ENCODE measurements at regions of chr1 and their contacts with region 1.

Region 1: GRCh38 chr1:151146412-151147140 is at the start of gene SEMA6C:
- DNase-seq: peak in 1 of 2 experiments; percentile 90
- H3K4me3 ChIP-seq: peak within 1 kb of the TSS; percentile 81 to 88 (median 85)
- H3K27ac ChIP-seq: no peak within 1 kb of the TSS
- H3K4me1 ChIP-seq: peaks cover 15 to 31% (median 21%) of the 10 kb centered on the region in 4 experiments
- H3K27me3 ChIP-seq: peaks cover 0 to 17% (median 8%) of the 10 kb centered on the region in 4 experiments; a peak in 5 of 7 replicates
- CTCF ChIP-seq: no peak
- EP300 ChIP-seq: no peak
- POLR2A ChIP-seq: no peak
- RAD21 ChIP-seq: no peak
- total RNA-seq, gene SEMA6C: 15.7 and 17.5 TPM in 2 replicates

Region 2: GRCh38 chr1:151106894-151107293 is 39.7 kb before region 1 on chr1:
- CTCF ChIA-PET with region 1: interaction called, 285 read pairs
- POLR2A ChIA-PET with region 1: no interaction called
- DNase-seq: no peak
- H3K4me3 ChIP-seq: no peak overlapping the region
- H3K27ac ChIP-seq: no peak overlapping the region
- H3K4me1 ChIP-seq: no peaks in the 10 kb centered on the region
- H3K27me3 ChIP-seq: no peaks in the 10 kb centered on the region
- CTCF ChIP-seq: no peak
- EP300 ChIP-seq: no peak
- POLR2A ChIP-seq: no peak
- RAD21 ChIP-seq: no peak

Region 3: DNA sequence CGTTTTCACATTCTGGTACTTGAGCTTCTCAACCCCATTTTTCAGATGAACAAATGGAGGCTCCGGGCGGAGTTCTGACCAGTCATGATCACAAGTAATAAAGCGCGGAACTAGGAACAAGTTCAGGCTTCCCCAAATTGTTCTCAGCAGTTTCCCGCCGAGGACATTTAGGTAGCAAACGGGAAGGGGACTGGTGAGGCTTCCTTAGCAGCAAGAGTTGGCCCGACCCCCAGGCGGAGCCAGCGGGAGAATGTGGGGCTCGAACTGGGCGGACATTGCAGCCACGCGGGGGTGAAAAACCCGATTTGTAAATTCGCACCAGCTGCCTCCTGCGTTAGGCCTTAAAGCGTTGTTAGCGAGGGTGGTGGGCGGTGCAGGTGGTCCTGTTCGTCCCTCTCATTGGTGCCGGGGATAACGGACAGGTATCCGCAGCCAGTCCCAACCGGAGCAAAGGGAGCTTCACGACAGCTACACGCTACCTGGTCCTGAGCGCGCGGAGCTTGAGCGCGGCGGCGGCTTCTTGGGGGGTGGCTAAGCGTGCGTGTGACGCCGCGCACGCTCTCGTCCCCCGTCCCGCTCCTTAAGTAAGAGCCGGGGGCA is 15.5 kb before region 1 on chr1:
- CTCF ChIA-PET with region 1: interaction called, 94 read pairs
- POLR2A ChIA-PET with region 1: interaction called, 124 read pairs
- DNase-seq: peak; percentile 87 to 91
- H3K4me3 ChIP-seq: peak overlapping the region; percentile 37 to 64 (median 45); a peak in 7 of 8 replicates
- H3K27ac ChIP-seq: peak overlapping the region; percentile 42; the same call in 1 of the 2 replicates
- H3K4me1 ChIP-seq: peaks cover 0 to 12% (median 8%) of the 10 kb centered on the region in 4 experiments; a peak in 5 of 7 replicates
- H3K27me3 ChIP-seq: peaks cover 0 to 28% (median 20%) of the 10 kb centered on the region in 4 experiments; a peak in 5 of 7 replicates
- CTCF ChIP-seq: no peak
- EP300 ChIP-seq: no peak
- POLR2A ChIP-seq: peak in 1 of 2 experiments; percentile 67; a peak in 1 of 3 replicates
- RAD21 ChIP-seq: 0 out of 4 replicates have a peak, but pooled peaks of 1 of the 2 experiments have one; percentile 10

Region 4: GRCh38 chr1:151165738-151166505 is 19.3 kb after region 1 on chr1 and contains the starts of genes LYSMD1 and SCNM1:
- CTCF ChIA-PET with region 1: interaction called, 3 read pairs
- POLR2A ChIA-PET with region 1: interaction called, 13 read pairs
- DNase-seq: peak; percentile 90 to 93
- H3K4me3 ChIP-seq: peak within 1 kb of the TSS; percentile 80 to 99 (median 95)
- H3K27ac ChIP-seq: peak within 1 kb of the TSS; percentile 42
- H3K4me1 ChIP-seq: peaks cover 5 to 10% (median 5%) of the 10 kb centered on the region in 4 experiments
- H3K27me3 ChIP-seq: no peaks in the 10 kb centered on the region
- CTCF ChIP-seq: no peak
- EP300 ChIP-seq: peak in 1 of 2 experiments; percentile 71; a peak in 1 of 3 replicates
- POLR2A ChIP-seq: peak in 1 of 2 experiments; percentile 43; a peak in 1 of 3 replicates
- RAD21 ChIP-seq: no peak
- total RNA-seq, gene LYSMD1: 4.9 and 6.0 TPM in 2 replicates
- total RNA-seq, gene SCNM1: 44.5 and 46.2 TPM in 2 replicates

Region 5: GRCh38 chr1:151251656-151252470 is 105.3 kb after region 1 on chr1:
- CTCF ChIA-PET with region 1: no interaction called
- POLR2A ChIA-PET with region 1: no interaction called
- DNase-seq: peak in 1 of 2 experiments; percentile 51
- H3K4me3 ChIP-seq: no peak overlapping the region
- H3K27ac ChIP-seq: no peak overlapping the region
- H3K4me1 ChIP-seq: peaks cover 0 to 1% (median 0%) of the 10 kb centered on the region in 4 experiments; a peak in 1 of 7 replicates
- H3K27me3 ChIP-seq: no peaks in the 10 kb centered on the region
- CTCF ChIP-seq: peak in 2 of 3 experiments; percentile 56 to 84; a peak in 3 of 4 replicates
- EP300 ChIP-seq: no peak
- POLR2A ChIP-seq: no peak
- RAD21 ChIP-seq: peak; percentile 53 to 55